Vagina (tissue), 2 donors: ENCODE measurements at regions of chr9 and their contacts with region 1.

Region 1: GRCh38 chr9:22079873-22080341 is 70.8 kb upstream of the CDKN2B start:
- DNase-seq: peak in 1 of 2 donors; percentile 87
- H3K4me3 ChIP-seq: no peak overlapping the region
- H3K27ac ChIP-seq: peak overlapping the region; percentile 45
- H3K4me1 ChIP-seq: peaks cover 26% of the 10 kb centered on the region
- H3K27me3 ChIP-seq: no peaks in the 10 kb centered on the region
- CTCF ChIP-seq: no peak
- POLR2A ChIP-seq: no peak

Region 2: GRCh38 chr9:21135504-21136135 is 944.3 kb before region 1 on chr9:
- intact Hi-C with region 1: loop called (anchors 5 kb)
- DNase-seq: no peak
- H3K4me3 ChIP-seq: no peak overlapping the region
- H3K27ac ChIP-seq: no peak overlapping the region
- H3K4me1 ChIP-seq: no peaks in the 10 kb centered on the region
- H3K27me3 ChIP-seq: no peaks in the 10 kb centered on the region
- CTCF ChIP-seq: no peak
- POLR2A ChIP-seq: no peak

Region 3: DNA sequence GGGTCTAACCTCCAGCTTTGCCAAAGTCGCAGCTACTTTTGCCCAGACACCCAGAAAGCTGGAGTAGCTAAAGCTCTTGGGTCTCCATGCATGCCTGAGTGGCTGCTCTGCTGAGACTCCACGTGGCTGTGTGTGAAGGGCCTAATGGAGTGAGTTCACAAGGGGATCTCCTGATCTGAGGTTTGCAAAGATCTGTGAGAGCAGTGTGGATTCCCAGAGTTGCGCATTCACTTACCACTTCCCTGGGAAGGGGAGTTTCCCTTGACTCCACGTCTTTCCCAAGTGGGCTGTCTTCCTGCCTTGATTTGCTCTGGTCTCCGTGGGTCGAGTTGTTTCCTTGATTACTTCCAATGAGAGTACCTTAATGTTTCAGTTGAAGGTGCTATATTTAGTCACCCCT is 53.2 kb before region 1 on chr9:
- intact Hi-C with region 1: no loop called
- DNase-seq: no peak
- H3K4me3 ChIP-seq: no peak overlapping the region
- H3K27ac ChIP-seq: no peak overlapping the region
- H3K4me1 ChIP-seq: peaks cover 10% of the 10 kb centered on the region
- H3K27me3 ChIP-seq: no peaks in the 10 kb centered on the region
- CTCF ChIP-seq: no peak
- POLR2A ChIP-seq: no peak

Region 4: GRCh38 chr9:22169727-22170503 is 90.0 kb after region 1 on chr9:
- intact Hi-C with region 1: no loop called
- DNase-seq: no peak
- H3K4me3 ChIP-seq: no peak overlapping the region
- H3K27ac ChIP-seq: no peak overlapping the region
- H3K4me1 ChIP-seq: no peaks in the 10 kb centered on the region
- H3K27me3 ChIP-seq: no peaks in the 10 kb centered on the region
- CTCF ChIP-seq: no peak
- POLR2A ChIP-seq: no peak